IMR-90 (cell line): ENCODE measurements at regions of chr15 and their contacts with region 1.

Region 1: GRCh38 chr15:69452692-69453521 is at the start of gene RPLP1:
- DNase-seq: peak; percentile 94
- ATAC-seq: peak; percentile 93
- H3K4me3 ChIP-seq: peak within 1 kb of the TSS; percentile 70
- H3K27ac ChIP-seq: peak within 1 kb of the TSS; percentile 80
- H3K4me1 ChIP-seq: peaks cover 13% of the 10 kb centered on the region
- H3K27me3 ChIP-seq: no peaks in the 10 kb centered on the region
- CTCF ChIP-seq: no peak
- POLR2A ChIP-seq: peak; percentile 99
- RAD21 ChIP-seq: no peak
- total RNA-seq, gene RPLP1: 97.0 and 132 TPM in 2 replicates

Region 2: DNA sequence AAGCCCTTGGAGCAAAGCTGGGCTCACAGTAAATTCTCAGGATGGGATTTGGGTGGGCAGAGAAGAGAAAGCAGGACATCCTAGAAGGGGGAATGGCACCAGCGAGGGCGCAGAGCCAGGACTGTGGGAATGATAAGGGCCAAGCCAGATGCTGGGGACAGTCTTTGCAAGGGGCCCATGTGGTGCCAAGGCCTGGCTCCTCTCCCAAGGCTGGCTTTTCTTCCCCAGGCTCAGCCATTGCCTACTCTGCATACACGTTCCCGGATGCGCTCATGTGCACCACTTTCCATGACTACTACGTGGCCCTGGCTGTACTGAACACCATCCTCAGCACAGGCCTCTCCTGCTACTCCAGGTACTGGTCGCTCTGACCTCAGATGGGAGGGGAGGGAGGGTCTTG is 63.5 kb before region 1 on chr15:
- CTCF ChIA-PET with region 1: no interaction called
- POLR2A ChIA-PET with region 1: no interaction called
- dilution Hi-C with region 1: no loop called
- in situ Hi-C with region 1: no loop called
- intact Hi-C with region 1: no loop called
- DNase-seq: no peak
- ATAC-seq: no peak
- H3K4me3 ChIP-seq: no peak overlapping the region
- H3K27ac ChIP-seq: no peak overlapping the region
- H3K4me1 ChIP-seq: peaks cover 7% of the 10 kb centered on the region
- H3K27me3 ChIP-seq: no peaks in the 10 kb centered on the region
- CTCF ChIP-seq: no peak
- POLR2A ChIP-seq: no peak
- RAD21 ChIP-seq: no peak

Region 3: GRCh38 chr15:69413822-69414700 is 38.8 kb before region 1 on chr15 and contains the start of gene KIF23:
- CTCF ChIA-PET with region 1: no interaction called
- POLR2A ChIA-PET with region 1: interaction called, 6 read pairs
- dilution Hi-C with region 1: no loop called
- in situ Hi-C with region 1: no loop called
- intact Hi-C with region 1: loop called (anchors 2 kb)
- DNase-seq: peak; percentile 94
- ATAC-seq: peak; percentile 81
- H3K4me3 ChIP-seq: peak within 1 kb of the TSS; percentile 78
- H3K27ac ChIP-seq: peak within 1 kb of the TSS; percentile 100
- H3K4me1 ChIP-seq: peaks cover 20% of the 10 kb centered on the region
- H3K27me3 ChIP-seq: no peaks in the 10 kb centered on the region
- CTCF ChIP-seq: no peak
- POLR2A ChIP-seq: no peak
- RAD21 ChIP-seq: no peak
- total RNA-seq, gene KIF23: 56.1 and 70.5 TPM in 2 replicates

Region 4: DNA sequence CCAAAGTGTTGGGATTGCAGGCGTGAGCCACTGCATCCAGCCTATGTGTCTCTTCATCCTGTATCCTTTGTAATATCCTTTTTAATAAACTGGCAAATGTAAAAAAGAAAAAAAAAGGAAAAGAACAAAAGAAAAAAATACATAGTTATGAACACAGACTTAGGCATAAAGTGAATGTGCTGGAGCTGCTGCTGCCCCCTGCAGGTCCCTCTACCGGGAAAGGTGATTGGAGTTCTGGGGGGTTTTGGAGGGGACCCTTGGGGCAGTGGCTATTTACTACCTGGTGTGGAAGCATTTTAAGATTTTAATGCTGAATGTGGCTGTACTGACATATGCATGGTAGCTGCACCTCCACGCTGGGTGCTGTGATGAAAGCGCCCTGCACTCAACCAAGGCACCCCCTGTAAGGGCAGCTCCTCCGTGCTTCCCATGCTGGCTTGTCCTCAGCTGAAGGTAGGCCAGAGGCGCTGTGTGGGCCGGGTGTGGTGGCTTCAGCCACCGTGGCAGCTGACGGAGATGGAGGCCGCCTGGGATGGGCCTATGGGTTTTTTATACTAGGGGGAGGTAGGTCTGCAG is 49.7 kb after region 1 on chr15:
- CTCF ChIA-PET with region 1: no interaction called
- POLR2A ChIA-PET with region 1: no interaction called
- dilution Hi-C with region 1: no loop called
- in situ Hi-C with region 1: no loop called
- intact Hi-C with region 1: no loop called
- DNase-seq: no peak
- ATAC-seq: no peak
- H3K4me3 ChIP-seq: no peak overlapping the region
- H3K27ac ChIP-seq: no peak overlapping the region
- H3K4me1 ChIP-seq: no peaks in the 10 kb centered on the region
- H3K27me3 ChIP-seq: peaks cover 49% of the 10 kb centered on the region
- CTCF ChIP-seq: no peak
- POLR2A ChIP-seq: no peak
- RAD21 ChIP-seq: no peak